Body of pancreas (tissue), 4 donors: ENCODE measurements at regions of chr12 and their contacts with region 1.

Region 1: GRCh38 chr12:51823875-51824565 is 24.5 kb downstream of the FIGNL2 start:
- DNase-seq: peak; percentile 59 to 76 (median 74)
- ATAC-seq: peak; percentile 60
- H3K4me3 ChIP-seq: no peak overlapping the region
- H3K27ac ChIP-seq: no peak overlapping the region
- H3K4me1 ChIP-seq: peaks cover 24% of the 10 kb centered on the region
- H3K27me3 ChIP-seq: no peaks in the 10 kb centered on the region
- CTCF ChIP-seq: peak; percentile 44 to 81 (median 73)
- POLR2A ChIP-seq: no peak

Region 2: DNA sequence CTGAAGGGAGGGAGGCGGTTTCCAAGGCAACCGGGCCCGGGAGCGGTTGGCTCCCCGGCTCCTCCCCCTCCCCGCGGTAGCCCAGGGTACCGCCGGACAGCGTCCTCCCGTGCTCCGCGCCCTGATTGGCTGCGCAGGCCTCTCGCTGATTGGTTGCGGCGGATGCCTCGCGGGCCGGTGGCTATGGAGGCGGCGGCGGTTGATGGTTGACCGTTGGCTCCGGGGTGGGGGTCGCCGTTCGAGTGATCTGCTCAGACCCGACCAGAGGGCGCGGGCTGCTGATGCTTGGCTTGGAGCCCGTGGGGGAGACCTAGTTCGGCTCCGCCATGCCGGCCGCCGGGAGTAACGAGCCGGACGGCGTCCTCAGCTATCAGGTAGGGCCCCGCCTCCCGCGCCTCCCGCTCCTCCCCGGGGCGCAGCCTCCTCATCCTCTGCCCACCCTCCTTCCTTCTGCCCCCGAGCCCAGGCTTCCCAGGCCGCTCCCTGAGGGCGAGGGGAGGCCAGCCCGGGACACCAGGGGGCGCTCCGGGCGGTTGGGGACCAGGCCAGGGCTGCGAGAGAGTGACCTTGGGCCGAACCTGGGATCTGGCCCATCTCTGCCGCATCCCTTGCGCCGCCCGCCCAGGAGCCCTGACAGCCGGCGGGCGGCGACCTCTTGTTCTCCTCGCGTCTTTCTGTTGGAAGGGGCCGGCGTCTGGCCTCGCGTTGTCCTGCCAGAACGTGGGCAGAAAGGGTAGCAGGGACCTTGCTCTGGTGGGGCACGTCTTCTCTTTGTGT is 399.2 kb before region 1 on chr12 and contains the start of gene SLC4A8:
- intact Hi-C with region 1: loop called (anchors 10 kb)
- DNase-seq: peak; percentile 58 to 78 (median 72)
- ATAC-seq: peak; percentile 68
- H3K4me3 ChIP-seq: no peak within 1 kb of the TSS
- H3K27ac ChIP-seq: no peak within 1 kb of the TSS
- H3K4me1 ChIP-seq: peaks cover 18% of the 10 kb centered on the region
- H3K27me3 ChIP-seq: peaks cover 0 to 6% of the 10 kb centered on the region in 2 donors
- CTCF ChIP-seq: peak; percentile 26 to 63 (median 60)
- POLR2A ChIP-seq: no peak
- total RNA-seq, gene SLC4A8: 1.6 to 2.3 TPM